Activated naive CD4-positive, alpha-beta T cell treated with anti-CD3 and anti-CD28 coated beads for 36 hours (primary cell): ENCODE measurements at regions of chr16 and their contacts with region 1.

Region 1: GRCh38 chr16:21584817-21585216 is 14.6 kb upstream of the METTL9 start:
- DNase-seq: no peak
- H3K4me3 Mint-ChIP-seq: no peak overlapping the region
- H3K27ac Mint-ChIP-seq: no peak overlapping the region
- H3K4me1 Mint-ChIP-seq: no peaks in the 10 kb centered on the region
- H3K27me3 Mint-ChIP-seq: no peaks in the 10 kb centered on the region

Region 2: DNA sequence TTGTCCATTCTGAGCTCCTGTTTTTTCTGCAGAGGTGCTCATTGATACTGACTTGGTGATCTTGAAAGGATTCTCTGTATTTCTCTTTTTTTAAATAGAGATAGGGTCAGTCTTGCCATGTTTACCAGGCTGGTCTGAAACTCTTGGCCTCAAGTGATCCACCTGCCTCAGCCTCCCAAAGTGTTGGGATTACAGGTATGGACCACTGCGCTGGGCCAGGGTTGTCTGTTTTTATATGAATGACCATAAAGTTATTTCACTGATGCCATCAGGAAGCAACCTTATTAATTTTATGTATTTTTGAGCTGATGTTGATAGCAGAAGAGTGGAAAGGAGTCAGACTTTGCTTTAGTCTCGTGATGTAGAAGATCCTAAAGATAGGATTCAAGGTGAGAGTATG is 21.1 kb before region 1 on chr16:
- CTCF ChIA-PET with region 1: no interaction called
- intact Hi-C with region 1: no loop called
- DNase-seq: no peak
- H3K4me3 Mint-ChIP-seq: no peak overlapping the region
- H3K27ac Mint-ChIP-seq: no peak overlapping the region
- H3K4me1 Mint-ChIP-seq: no peaks in the 10 kb centered on the region
- H3K27me3 Mint-ChIP-seq: no peaks in the 10 kb centered on the region

Region 3: DNA sequence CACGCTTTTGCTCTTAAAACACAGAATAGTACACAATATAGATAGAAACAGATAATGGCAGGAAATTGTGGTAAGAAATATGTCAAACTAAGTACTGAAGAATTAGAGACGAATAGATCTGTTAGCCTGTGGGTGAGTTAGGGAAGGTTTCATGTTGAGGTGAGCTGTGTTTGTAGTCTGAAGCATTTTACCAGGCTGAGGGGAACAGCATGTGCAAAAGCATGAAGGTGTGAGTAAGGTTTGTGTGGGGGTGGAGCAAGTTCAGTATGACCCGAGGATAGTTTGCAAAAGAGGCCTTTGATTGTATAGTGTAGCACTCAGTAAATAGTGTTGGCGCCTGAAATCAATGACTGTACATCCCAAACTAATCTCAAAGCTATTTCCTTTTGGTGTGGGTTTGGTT is 53.8 kb after region 1 on chr16:
- CTCF ChIA-PET with region 1: interaction called, 16 read pairs
- intact Hi-C with region 1: loop called (anchors 1 kb)
- DNase-seq: peak; percentile 60
- H3K4me3 Mint-ChIP-seq: no peak overlapping the region
- H3K27ac Mint-ChIP-seq: peak overlapping the region; percentile 10
- H3K4me1 Mint-ChIP-seq: peaks cover 35% of the 10 kb centered on the region
- H3K27me3 Mint-ChIP-seq: no peaks in the 10 kb centered on the region

Region 4: GRCh38 chr16:21673469-21673868 is 88.7 kb after region 1 on chr16:
- CTCF ChIA-PET with region 1: no interaction called
- intact Hi-C with region 1: no loop called
- DNase-seq: no peak
- H3K4me3 Mint-ChIP-seq: no peak overlapping the region
- H3K27ac Mint-ChIP-seq: no peak overlapping the region
- H3K4me1 Mint-ChIP-seq: no peaks in the 10 kb centered on the region
- H3K27me3 Mint-ChIP-seq: no peaks in the 10 kb centered on the region

Region 5: GRCh38 chr16:21708533-21709115 is 123.8 kb after region 1 on chr16:
- CTCF ChIA-PET with region 1: interaction called, 44 read pairs
- intact Hi-C with region 1: loop called (anchors 2 kb)
- DNase-seq: peak; percentile 96
- H3K4me3 Mint-ChIP-seq: no peak overlapping the region
- H3K27ac Mint-ChIP-seq: no peak overlapping the region
- H3K4me1 Mint-ChIP-seq: peaks cover 4% of the 10 kb centered on the region
- H3K27me3 Mint-ChIP-seq: no peaks in the 10 kb centered on the region